Heart left ventricle (tissue), 16 donors: ENCODE measurements at regions of chr2 and their contacts with region 1.

Region 1: DNA sequence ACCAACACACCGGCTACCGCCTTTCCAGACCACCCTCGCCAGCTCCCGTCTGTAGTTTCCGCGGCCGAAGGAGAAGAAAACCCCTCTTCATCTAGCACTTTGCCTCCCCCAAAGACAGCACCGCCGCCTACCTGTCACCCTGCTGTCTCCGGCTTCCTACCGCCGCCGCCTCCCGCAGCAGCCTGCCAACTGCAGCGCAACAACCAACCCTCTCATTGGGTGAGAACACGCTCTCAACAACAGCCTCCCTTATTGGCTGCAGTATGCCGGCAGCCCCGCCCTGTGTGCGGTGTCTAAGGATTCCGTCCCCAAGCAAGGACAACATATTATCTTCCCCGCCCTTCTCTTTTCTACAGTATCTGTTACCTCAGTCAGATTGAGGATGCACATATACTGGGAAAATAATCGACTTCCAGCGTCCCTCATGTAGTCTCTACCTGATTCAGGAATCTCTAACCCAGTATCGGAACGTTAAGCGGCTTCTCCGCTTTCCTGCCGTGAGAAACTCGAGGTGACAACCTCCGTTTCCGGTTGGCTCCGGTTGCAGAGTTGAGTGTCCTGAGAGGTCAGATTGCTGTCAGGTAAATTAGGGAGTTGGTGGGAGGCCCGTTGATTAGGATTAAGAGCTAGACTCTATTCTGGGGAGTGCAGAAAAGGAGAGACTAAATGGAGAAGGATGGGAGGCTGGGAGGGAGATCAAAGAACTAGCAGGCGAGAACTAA is at the starts of genes HYCC2 and NDUFB3:
- DNase-seq: peak; percentile 91 to 93 (median 92)
- ATAC-seq: peak; percentile 99 to 100 (median 100)
- H3K4me3 ChIP-seq: peak within 1 kb of the TSS; percentile 70 to 98 (median 90)
- H3K27ac ChIP-seq: peak within 1 kb of the TSS; percentile 82 to 99 (median 92)
- H3K4me1 ChIP-seq: peaks cover 5 to 66% (median 43%) of the 10 kb centered on the region in 12 donors
- H3K27me3 ChIP-seq: no peaks in the 10 kb centered on the region
- CTCF ChIP-seq: peak in 11 of 12 donors; percentile 15 to 58 (median 44)
- POLR2A ChIP-seq: peak in 1 of 2 donors; percentile 65
- total RNA-seq, gene HYCC2: 5.8 to 16.3 (median 12.1) TPM
- total RNA-seq, gene NDUFB3: 197 to 496 (median 348) TPM

Region 2: DNA sequence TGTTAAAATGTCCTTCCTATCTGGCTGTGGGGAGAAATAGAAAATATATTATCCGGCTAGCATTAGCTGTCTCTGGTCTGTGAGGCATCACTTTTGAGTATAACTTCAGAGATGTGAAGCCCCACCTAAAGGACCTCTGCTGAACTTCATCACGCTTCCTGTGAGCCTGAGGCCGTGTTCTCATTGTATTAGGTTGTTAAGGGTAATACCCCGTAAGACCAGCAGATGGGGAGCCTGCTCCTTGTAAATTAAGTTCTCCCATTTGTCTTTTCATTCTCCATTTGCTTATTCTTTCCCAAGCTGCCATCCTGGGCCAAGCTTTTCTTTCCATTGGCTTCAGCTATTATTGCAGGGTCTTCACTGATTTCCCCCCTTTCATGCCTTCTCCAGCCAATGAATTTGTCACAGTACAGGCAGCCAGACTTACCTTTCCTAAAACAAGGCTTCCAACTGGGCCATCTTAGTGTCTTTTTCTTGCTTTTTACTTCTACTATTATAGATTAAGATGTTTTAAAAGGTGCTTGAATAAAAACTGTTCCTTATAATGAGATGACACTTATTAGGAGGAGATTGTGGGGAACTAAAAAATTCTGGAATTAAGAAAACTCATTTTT is 170.1 kb before region 1 on chr2:
- intact Hi-C with region 1: loop called in 9 of 10 experiments (anchors 2 to 10 kb)
- DNase-seq: peak in 3 of 5 donors; percentile 43 to 67 (median 56)
- ATAC-seq: peak; percentile 61 to 88 (median 84)
- H3K4me3 ChIP-seq: no peak overlapping the region
- H3K27ac ChIP-seq: peak overlapping the region in 1 of 12 donors; percentile 9
- H3K4me1 ChIP-seq: peaks cover 0 to 21% (median 2%) of the 10 kb centered on the region in 12 donors
- H3K27me3 ChIP-seq: no peaks in the 10 kb centered on the region
- CTCF ChIP-seq: peak; percentile 61 to 82 (median 76)
- POLR2A ChIP-seq: no peak

Region 3: GRCh38 chr2:201049455-201049854 is 22.2 kb before region 1 on chr2:
- intact Hi-C with region 1: no loop called
- DNase-seq: no peak
- ATAC-seq: no peak
- H3K4me3 ChIP-seq: no peak overlapping the region
- H3K27ac ChIP-seq: no peak overlapping the region
- H3K4me1 ChIP-seq: peaks cover 0 to 10% (median 0%) of the 10 kb centered on the region in 12 donors
- H3K27me3 ChIP-seq: no peaks in the 10 kb centered on the region
- CTCF ChIP-seq: no peak
- POLR2A ChIP-seq: no peak

Region 4: DNA sequence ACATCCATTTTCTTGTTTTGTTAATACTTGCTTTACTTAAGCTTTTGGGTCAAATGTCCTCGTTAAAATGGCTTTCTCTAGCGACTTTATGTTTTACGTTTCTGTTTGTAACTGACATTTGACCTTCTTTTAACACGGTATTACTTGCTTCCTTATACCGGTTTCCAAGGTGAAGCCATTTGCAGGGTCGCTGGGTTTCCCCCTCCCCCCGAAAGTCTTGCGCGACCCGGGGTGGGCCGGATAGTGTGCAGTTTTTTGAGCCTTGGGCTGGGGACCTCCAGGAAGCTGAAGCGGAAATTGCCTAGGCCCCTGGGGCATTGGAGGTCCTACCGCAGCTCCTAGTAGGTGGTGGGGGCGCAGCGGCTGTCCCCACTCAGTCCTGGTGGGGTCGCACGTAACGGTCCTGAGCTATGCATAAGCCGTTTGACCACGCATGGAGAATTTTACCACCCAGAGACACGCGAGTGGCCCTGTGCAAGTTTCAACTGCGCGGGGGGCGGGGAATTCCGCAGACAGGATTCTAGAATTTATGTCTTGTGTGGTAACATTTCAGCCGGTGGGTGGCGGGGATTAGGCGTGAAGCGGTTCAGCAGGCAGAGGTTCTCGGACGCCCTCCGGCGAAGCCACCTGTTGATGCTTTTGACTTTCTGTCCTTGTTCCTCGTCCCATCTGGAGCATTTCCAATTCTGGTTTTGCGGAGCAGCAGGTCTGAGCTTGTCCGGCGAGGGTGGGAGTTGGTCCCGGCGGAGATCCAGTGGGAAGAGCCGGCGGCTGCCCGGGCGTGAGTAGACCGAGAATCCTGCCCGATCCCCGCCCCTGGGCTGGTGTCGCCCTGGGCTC is 46.7 kb after region 1 on chr2:
- intact Hi-C with region 1: loop called in 7 of 10 experiments (anchors 1 to 5 kb)
- DNase-seq: peak; percentile 91 to 95 (median 92)
- ATAC-seq: peak; percentile 44 to 75 (median 52)
- H3K4me3 ChIP-seq: peak overlapping the region; percentile 65 to 99 (median 85)
- H3K27ac ChIP-seq: peak overlapping the region; percentile 94 to 100 (median 100)
- H3K4me1 ChIP-seq: peaks cover 0 to 55% (median 30%) of the 10 kb centered on the region in 12 donors
- H3K27me3 ChIP-seq: no peaks in the 10 kb centered on the region
- CTCF ChIP-seq: peak; percentile 19 to 65 (median 51)
- POLR2A ChIP-seq: peak in 1 of 2 donors; percentile 71

Region 5: GRCh38 chr2:201158111-201158929 is 86.7 kb after region 1 on chr2:
- intact Hi-C with region 1: loop called in 6 of 10 experiments (anchors 5 kb)
- DNase-seq: peak in 4 of 5 donors; percentile 62 to 73 (median 70)
- ATAC-seq: peak; percentile 69 to 92 (median 82)
- H3K4me3 ChIP-seq: no peak overlapping the region
- H3K27ac ChIP-seq: peak overlapping the region in 11 of 12 donors; percentile 20 to 89 (median 66)
- H3K4me1 ChIP-seq: peaks cover 2 to 62% (median 23%) of the 10 kb centered on the region in 12 donors
- H3K27me3 ChIP-seq: no peaks in the 10 kb centered on the region
- CTCF ChIP-seq: peak; percentile 48 to 79 (median 62)
- POLR2A ChIP-seq: peak in 1 of 2 donors; percentile 13

Region 6: DNA sequence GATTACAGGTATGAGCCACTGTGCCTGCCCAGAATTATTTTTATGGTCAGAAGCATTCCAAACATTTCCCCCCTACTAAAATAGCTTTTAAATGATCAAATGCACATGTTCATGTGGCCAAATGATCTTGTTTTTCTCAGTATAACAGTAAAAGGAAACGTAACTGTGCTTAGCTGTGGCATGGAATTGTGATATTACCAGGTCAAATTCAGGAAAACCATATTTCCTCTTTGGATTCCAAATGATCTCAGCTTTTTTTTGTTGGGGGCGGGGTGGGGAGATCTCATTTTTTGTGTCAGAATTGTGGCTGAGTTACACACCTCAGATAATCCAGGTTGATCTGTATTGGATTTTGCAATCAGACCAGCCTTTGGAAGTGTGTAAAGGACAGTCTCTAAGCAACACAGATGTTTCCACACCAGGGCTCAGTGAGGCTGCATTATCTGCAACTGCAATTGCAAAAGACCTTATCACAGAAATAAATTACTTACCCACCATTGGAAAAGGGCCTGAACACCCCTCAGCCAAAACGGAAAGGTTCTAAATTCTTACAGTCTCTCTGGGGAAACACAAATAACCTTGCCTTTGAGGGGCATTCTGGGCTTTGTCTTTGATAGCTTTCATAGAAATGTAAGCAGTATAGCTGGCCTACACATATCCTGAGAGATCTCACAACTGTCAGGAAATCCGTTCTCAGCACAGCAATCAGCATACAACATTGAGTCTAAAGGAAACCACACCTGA is 119.7 kb after region 1 on chr2:
- intact Hi-C with region 1: no loop called
- DNase-seq: peak in 1 of 5 donors; percentile 30
- ATAC-seq: peak; percentile 69 to 93 (median 86)
- H3K4me3 ChIP-seq: no peak overlapping the region
- H3K27ac ChIP-seq: peak overlapping the region in 10 of 12 donors; percentile 47 to 82 (median 69)
- H3K4me1 ChIP-seq: peaks cover 0 to 74% (median 23%) of the 10 kb centered on the region in 12 donors
- H3K27me3 ChIP-seq: no peaks in the 10 kb centered on the region
- CTCF ChIP-seq: no peak
- POLR2A ChIP-seq: no peak